Mammary epithelial cell (primary cell): ENCODE measurements at regions of chr17 and their contacts with region 1.

Region 1: GRCh38 chr17:58517734-58518609 is 3.5 kb upstream of the MTMR4 start:
- DNase-seq: peak; percentile 100
- H3K4me3 ChIP-seq: peak overlapping the region; percentile 67 to 93 (median 76)
- H3K27ac ChIP-seq: peak overlapping the region; percentile 72
- H3K4me1 ChIP-seq: peaks cover 17% of the 10 kb centered on the region
- H3K27me3 ChIP-seq: no peaks in the 10 kb centered on the region
- CTCF ChIP-seq: no peak

Region 2: GRCh38 chr17:58577642-58578091 is 59.7 kb after region 1 on chr17:
- CTCF ChIA-PET with region 1: interaction called, 4 read pairs
- dilution Hi-C with region 1: no loop called
- in situ Hi-C with region 1: no loop called
- intact Hi-C with region 1: loop called (anchors 2 kb)
- DNase-seq: peak; percentile 40
- H3K4me3 ChIP-seq: no peak overlapping the region
- H3K27ac ChIP-seq: peak overlapping the region; percentile 33
- H3K4me1 ChIP-seq: peaks cover 29% of the 10 kb centered on the region
- H3K27me3 ChIP-seq: no peaks in the 10 kb centered on the region
- CTCF ChIP-seq: peak; percentile 72 to 84

Region 3: DNA sequence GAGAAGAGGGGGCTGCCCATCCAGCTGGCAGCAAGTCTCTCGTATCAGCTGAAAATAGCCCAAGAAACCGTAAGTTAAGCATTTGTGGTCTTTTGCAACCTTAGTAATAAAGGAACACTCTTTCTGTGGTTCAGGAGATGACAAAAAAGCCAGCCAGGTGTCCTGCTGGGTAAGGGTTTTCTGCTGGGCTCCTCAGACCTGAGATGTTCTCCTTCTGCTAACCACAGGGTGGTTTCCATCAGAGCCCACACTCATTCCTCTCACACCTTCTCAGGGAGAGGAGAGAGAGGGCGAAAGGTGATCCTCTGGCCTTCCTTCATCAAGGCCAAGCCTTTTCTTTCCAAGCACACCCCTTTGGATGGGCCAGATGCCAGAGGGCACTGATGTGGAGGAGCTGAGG is 103.2 kb after region 1 on chr17:
- CTCF ChIA-PET with region 1: no interaction called
- dilution Hi-C with region 1: no loop called
- in situ Hi-C with region 1: loop called in 1 of 2 experiments (anchors 10 kb)
- intact Hi-C with region 1: no loop called
- DNase-seq: no peak
- H3K4me3 ChIP-seq: no peak overlapping the region
- H3K27ac ChIP-seq: no peak overlapping the region
- H3K4me1 ChIP-seq: no peaks in the 10 kb centered on the region
- H3K27me3 ChIP-seq: peaks cover 3% of the 10 kb centered on the region
- CTCF ChIP-seq: no peak

Region 4: DNA sequence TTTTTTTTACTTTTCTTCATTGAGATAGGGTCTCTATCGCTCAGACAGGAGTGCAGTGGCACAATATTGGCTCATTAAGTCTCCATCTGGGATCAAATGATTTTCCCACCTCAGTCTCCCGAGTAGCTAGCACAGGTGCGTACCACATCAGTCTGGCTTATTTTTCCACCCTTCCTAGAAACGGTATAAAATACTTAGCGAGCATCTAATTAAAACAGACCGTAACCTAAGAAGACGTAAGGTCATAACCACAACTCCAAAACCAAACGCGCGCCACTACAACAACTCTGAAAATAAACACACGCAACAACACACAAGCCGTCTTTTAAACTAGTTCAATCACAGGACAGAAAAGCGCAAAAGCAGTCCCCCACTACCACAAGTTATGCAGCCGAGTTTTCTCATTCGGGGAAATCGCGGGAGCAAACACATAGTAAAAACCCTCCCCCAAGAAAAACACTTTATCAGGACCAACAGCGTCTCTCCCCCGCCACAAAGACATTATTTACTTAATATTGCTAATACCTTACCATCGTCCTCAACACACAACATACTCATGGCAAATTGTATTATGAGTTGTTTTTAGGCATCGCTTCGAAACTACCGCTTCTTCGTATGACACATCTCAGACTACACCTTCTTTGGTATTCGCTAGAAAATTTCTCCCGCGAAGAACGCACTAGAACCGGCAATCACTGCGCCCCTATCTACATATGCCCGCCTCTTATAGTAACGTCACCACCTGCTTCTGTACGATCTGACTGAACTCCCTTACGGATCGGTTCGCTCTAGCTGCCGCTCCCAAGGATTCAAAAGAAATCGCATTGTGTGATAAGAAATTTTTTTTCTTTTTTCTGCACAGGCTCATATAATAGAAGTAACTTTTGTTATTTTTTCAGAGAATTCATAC is 141.1 kb after region 1 on chr17:
- CTCF ChIA-PET with region 1: no interaction called
- dilution Hi-C with region 1: no loop called
- in situ Hi-C with region 1: loop called in 1 of 2 experiments (anchors 10 kb)
- intact Hi-C with region 1: loop called (anchors 1 kb)
- DNase-seq: peak; percentile 99
- H3K4me3 ChIP-seq: peak overlapping the region; percentile 22 to 40 (median 31)
- H3K27ac ChIP-seq: peak overlapping the region; percentile 99
- H3K4me1 ChIP-seq: no peaks in the 10 kb centered on the region
- H3K27me3 ChIP-seq: no peaks in the 10 kb centered on the region
- CTCF ChIP-seq: no peak

Region 5: GRCh38 chr17:58692239-58693055 is 174.5 kb after region 1 on chr17 and contains the start of gene RAD51C:
- CTCF ChIA-PET with region 1: no interaction called
- dilution Hi-C with region 1: no loop called
- in situ Hi-C with region 1: no loop called
- intact Hi-C with region 1: loop called (anchors 2 kb)
- DNase-seq: peak; percentile 81
- H3K4me3 ChIP-seq: peak within 1 kb of the TSS; percentile 52 to 85 (median 74)
- H3K27ac ChIP-seq: peak within 1 kb of the TSS; percentile 76
- H3K4me1 ChIP-seq: peaks cover 11% of the 10 kb centered on the region
- H3K27me3 ChIP-seq: no peaks in the 10 kb centered on the region
- CTCF ChIP-seq: no peak
- total RNA-seq, gene RAD51C: 20.8 to 55.6 TPM

Region 6: GRCh38 chr17:58806046-58806445 is 288.1 kb after region 1 on chr17:
- CTCF ChIA-PET with region 1: no interaction called
- dilution Hi-C with region 1: no loop called
- in situ Hi-C with region 1: no loop called
- intact Hi-C with region 1: no loop called
- DNase-seq: no peak
- H3K4me3 ChIP-seq: no peak overlapping the region
- H3K27ac ChIP-seq: no peak overlapping the region
- H3K4me1 ChIP-seq: no peaks in the 10 kb centered on the region
- H3K27me3 ChIP-seq: no peaks in the 10 kb centered on the region
- CTCF ChIP-seq: no peak

Region 7: DNA sequence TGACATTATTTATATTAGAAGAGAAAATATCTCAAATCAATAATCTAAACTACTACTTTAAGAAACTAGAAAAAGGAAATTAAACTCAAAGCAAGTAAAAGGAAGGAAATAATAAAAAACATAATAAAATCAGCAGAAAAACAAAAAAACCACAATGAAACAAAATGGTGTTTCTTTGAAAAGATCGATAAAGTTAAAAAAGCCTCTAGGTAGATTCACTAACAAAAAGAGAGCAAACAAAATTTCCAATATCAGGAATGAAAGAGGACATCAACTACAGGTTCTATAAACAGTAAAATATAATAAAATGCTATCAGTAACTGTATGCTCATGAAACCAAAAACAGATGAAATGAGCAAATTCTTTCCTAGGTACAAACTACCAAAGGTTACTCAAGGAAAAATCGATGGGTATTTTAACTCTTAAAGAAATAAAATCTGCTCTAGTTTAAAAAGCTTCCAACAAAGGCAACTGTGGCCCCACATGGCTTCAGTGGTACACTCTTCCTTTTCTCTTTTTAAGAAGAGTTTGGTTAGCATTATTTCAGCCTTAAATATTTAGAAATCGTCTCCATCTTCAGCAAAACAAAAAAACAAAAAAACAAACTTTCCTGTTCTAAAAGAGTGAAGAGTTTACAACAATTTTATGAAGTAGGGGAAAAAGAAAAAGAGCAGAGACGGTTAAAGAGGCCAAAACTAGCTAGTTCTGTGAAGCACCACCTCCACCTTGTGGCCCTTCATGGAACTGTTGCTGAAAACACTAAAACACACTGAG is 486.6 kb after region 1 on chr17:
- CTCF ChIA-PET with region 1: interaction called, 5 read pairs
- dilution Hi-C with region 1: no loop called
- in situ Hi-C with region 1: loop called in 1 of 2 experiments (anchors 25 kb)
- intact Hi-C with region 1: loop called (anchors 1 kb)
- DNase-seq: peak; percentile 29
- H3K4me3 ChIP-seq: no peak overlapping the region
- H3K27ac ChIP-seq: no peak overlapping the region
- H3K4me1 ChIP-seq: no peaks in the 10 kb centered on the region
- H3K27me3 ChIP-seq: no peaks in the 10 kb centered on the region
- CTCF ChIP-seq: peak; percentile 90 to 92